ENCODE measurements at regions of chr3 and their contacts with region 1.

Region 1: GRCh38 chr3:44976002-44976815 is at the starts of genes EXOSC7 and ZDHHC3:
- DNase-seq: peak; percentile 86
- ATAC-seq: peak; percentile 86
- H3K4me3 Mint-ChIP-seq: peak within 1 kb of the TSS; percentile 94
- H3K27ac Mint-ChIP-seq: peak within 1 kb of the TSS; percentile 96
- H3K4me1 Mint-ChIP-seq: peaks cover 38% of the 10 kb centered on the region
- H3K27me3 Mint-ChIP-seq: no peaks in the 10 kb centered on the region
- total RNA-seq, gene EXOSC7: 47.8 to 49.0 TPM
- total RNA-seq, gene ZDHHC3: 44.7 to 51.1 TPM

Region 2: DNA sequence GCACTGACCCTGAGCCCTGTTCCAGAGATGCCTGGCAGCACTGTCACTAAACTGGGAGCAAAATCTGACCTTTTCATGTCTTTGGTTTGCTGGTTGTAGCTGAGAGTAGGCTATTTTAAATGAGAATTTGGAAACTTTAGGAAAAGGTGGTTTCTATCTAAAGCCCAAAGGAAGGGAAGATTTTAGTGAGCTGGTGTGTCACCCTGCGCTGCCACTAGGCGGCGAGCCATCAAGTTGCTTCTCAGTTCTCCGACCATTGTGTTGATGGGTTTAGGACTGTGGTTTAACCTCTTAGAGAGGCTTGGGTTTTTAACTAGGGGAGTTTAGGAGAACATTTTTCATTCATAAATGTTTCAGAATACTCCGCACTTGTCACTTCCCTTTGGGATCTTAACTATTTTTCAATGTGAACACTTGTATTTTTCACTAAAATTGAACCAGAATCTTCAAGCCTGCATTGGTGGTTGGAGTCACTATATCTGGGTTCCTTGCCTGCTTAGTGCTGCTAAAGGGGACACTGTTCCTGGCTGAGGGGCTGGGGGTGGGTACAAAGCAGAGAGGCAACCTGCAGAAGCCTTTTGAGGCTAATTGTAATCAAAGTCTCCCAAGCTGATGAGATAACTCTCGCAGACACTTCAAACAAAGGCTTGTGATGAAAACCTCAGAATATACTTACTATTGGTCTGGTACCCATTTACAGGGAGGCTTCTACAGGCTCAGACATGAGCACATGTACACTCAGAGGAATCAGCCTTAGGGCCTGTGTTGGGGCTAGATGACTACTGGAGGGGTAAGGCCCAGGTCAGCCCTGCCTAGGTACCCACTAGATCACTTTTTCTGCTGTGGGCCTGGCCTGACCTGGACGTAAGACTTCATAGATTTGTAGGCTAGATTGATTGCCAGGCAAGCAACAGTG is 16.6 kb after region 1 on chr3:
- POLR2A ChIA-PET with region 1: interaction called, 18 read pairs
- DNase-seq: no peak
- ATAC-seq: no peak
- H3K4me3 Mint-ChIP-seq: no peak overlapping the region
- H3K27ac Mint-ChIP-seq: no peak overlapping the region
- H3K4me1 Mint-ChIP-seq: peaks cover 55% of the 10 kb centered on the region
- H3K27me3 Mint-ChIP-seq: no peaks in the 10 kb centered on the region

Measured in activated naive CD8-positive, alpha-beta T cell treated with anti-CD3 and anti-CD28 coated beads, Interleukin-2, amount 10 ng/mL, durations not matched to agents 7 days and 5 days (primary cell).